Activated CD4-positive, alpha-beta memory T cell treated with anti-CD3 and anti-CD28 coated beads, Interleukin-2, amount 10 ng/mL, durations not matched to agents 7 days and 5 days (primary cell): ENCODE measurements at regions of chr16 and their contacts with region 1.

Region 1: GRCh38 chr16:74998481-74999218 is at the start of gene ZNRF1:
- DNase-seq: peak; percentile 83
- H3K4me3 Mint-ChIP-seq: peak within 1 kb of the TSS; percentile 77
- H3K27ac Mint-ChIP-seq: peak within 1 kb of the TSS; percentile 73
- H3K4me1 Mint-ChIP-seq: peaks cover 35% of the 10 kb centered on the region
- H3K27me3 Mint-ChIP-seq: peaks cover 22% of the 10 kb centered on the region
- total RNA-seq, gene ZNRF1: 22.7 to 25.3 TPM

Region 2: DNA sequence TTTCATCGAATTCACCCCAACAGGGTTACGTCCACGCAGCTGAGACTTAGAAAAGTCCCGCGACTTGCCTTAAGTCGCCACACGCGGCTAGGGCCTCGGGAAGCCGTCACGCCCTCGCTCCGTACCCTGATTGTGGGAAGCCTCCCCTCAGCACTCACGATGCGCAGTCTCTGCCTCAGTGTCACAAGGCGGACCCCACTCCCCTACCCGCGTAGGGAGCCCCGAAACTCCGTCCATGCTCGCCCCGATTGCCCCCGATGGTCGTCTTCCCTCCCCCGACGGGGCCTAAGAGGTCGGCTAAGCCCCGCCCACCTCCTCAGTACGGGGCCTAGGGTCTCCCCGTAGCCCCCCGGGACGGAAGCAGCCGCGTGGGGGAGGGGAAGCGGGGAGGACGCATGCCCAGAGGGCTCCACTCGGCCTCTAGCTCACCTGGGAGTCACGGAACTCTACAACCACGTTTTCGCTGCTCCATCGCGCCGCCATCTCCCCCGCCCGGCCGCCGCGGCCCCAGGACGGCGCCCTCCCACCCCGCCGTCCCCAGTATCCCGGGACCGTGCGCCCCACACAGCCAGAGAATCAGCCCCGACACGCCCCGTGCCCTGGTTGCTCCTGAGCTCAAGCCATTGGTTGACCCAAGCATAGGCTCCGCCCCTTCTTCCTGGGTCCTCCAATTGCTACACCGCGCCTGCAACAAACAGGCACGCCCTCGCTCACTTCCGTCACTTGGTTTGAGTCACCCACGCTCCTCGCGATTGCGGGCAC is 13.9 kb before region 1 on chr16 and contains the start of gene WDR59:
- CTCF ChIA-PET with region 1: interaction called, 36 read pairs
- POLR2A ChIA-PET with region 1: interaction called, 8 read pairs
- DNase-seq: peak; percentile 99
- H3K4me3 Mint-ChIP-seq: peak within 1 kb of the TSS; percentile 99
- H3K27ac Mint-ChIP-seq: peak within 1 kb of the TSS; percentile 86
- H3K4me1 Mint-ChIP-seq: peaks cover 25% of the 10 kb centered on the region
- H3K27me3 Mint-ChIP-seq: no peaks in the 10 kb centered on the region
- total RNA-seq, gene WDR59: 67.1 to 72.3 TPM

Region 3: GRCh38 chr16:75011634-75012307 is 13.1 kb after region 1 on chr16:
- CTCF ChIA-PET with region 1: interaction called, 7 read pairs
- POLR2A ChIA-PET with region 1: interaction called, 18 read pairs
- DNase-seq: peak; percentile 40
- H3K4me3 Mint-ChIP-seq: peak overlapping the region; percentile 64
- H3K27ac Mint-ChIP-seq: peak overlapping the region; percentile 77
- H3K4me1 Mint-ChIP-seq: peaks cover 38% of the 10 kb centered on the region
- H3K27me3 Mint-ChIP-seq: no peaks in the 10 kb centered on the region